Activated CD8-positive, alpha-beta T cell treated with anti-CD3 and anti-CD28 coated beads, Interleukin-2, amount 10 ng/mL, durations not matched to agents 7 days and 5 days (primary cell): ENCODE measurements at regions of chr19 and their contacts with region 1.

Region 1: GRCh38 chr19:14405758-14406644 is 13.1 kb downstream of the DDX39A start:
- DNase-seq: peak; percentile 91
- ATAC-seq: peak; percentile 54
- H3K4me3 Mint-ChIP-seq: no peak overlapping the region
- H3K27ac Mint-ChIP-seq: peak overlapping the region; percentile 77
- H3K4me1 Mint-ChIP-seq: peaks cover 30% of the 10 kb centered on the region
- H3K27me3 Mint-ChIP-seq: no peaks in the 10 kb centered on the region

Region 2: DNA sequence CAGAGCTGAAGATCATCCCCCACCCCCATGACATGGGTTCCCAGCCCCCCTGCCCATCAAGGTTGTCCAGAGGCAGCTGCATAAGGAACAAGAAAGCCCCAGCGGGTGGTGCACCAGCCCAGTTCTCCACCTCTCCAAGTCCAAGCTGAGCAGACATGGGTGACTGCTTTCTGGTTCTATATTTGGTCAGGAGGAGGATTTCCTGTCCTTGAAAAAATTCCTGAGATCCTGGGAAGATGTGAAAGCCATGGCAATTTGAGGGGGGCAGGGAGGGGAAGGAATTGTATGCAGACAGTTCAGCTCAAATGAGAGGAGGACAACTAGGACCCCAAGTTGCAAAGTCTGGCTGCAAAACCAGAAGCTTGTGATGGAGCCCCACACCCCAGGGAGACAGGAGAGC is 80.1 kb before region 1 on chr19:
- CTCF ChIA-PET with region 1: no interaction called
- POLR2A ChIA-PET with region 1: no interaction called
- DNase-seq: no peak
- ATAC-seq: no peak
- H3K4me3 Mint-ChIP-seq: no peak overlapping the region
- H3K27ac Mint-ChIP-seq: no peak overlapping the region
- H3K4me1 Mint-ChIP-seq: no peaks in the 10 kb centered on the region
- H3K27me3 Mint-ChIP-seq: no peaks in the 10 kb centered on the region

Region 3: DNA sequence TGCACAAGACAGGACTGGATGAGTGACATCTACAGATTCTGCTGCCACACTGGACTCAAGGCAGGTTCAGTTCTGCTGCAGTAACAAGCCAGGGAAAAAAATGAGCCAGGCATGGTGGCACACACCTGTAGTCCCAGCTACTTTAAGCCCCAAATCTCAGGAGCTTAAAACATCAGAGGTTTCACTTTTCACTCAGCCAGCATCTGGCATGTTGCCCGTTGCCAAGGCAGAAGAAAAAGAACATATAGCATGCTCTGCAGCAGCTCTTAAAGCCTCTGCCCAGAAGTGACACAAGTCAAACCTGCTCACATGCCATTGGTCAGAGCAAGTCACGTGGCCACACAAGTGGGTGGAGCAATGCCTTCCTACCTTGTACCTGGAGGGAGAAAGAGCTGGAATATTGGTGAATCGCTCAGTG is 39.5 kb before region 1 on chr19:
- CTCF ChIA-PET with region 1: interaction called, 123 read pairs
- POLR2A ChIA-PET with region 1: interaction called, 20 read pairs
- DNase-seq: peak; percentile 92
- ATAC-seq: peak; percentile 38
- H3K4me3 Mint-ChIP-seq: peak overlapping the region; percentile 45
- H3K27ac Mint-ChIP-seq: peak overlapping the region; percentile 86
- H3K4me1 Mint-ChIP-seq: peaks cover 76% of the 10 kb centered on the region
- H3K27me3 Mint-ChIP-seq: no peaks in the 10 kb centered on the region

Region 4: GRCh38 chr19:14383661-14384555 is 22.1 kb before region 1 on chr19:
- CTCF ChIA-PET with region 1: interaction called, 31 read pairs
- POLR2A ChIA-PET with region 1: interaction called, 49 read pairs
- DNase-seq: peak; percentile 70
- ATAC-seq: peak; percentile 10
- H3K4me3 Mint-ChIP-seq: peak overlapping the region; percentile 86
- H3K27ac Mint-ChIP-seq: peak overlapping the region; percentile 89
- H3K4me1 Mint-ChIP-seq: peaks cover 45% of the 10 kb centered on the region
- H3K27me3 Mint-ChIP-seq: no peaks in the 10 kb centered on the region

Region 5: DNA sequence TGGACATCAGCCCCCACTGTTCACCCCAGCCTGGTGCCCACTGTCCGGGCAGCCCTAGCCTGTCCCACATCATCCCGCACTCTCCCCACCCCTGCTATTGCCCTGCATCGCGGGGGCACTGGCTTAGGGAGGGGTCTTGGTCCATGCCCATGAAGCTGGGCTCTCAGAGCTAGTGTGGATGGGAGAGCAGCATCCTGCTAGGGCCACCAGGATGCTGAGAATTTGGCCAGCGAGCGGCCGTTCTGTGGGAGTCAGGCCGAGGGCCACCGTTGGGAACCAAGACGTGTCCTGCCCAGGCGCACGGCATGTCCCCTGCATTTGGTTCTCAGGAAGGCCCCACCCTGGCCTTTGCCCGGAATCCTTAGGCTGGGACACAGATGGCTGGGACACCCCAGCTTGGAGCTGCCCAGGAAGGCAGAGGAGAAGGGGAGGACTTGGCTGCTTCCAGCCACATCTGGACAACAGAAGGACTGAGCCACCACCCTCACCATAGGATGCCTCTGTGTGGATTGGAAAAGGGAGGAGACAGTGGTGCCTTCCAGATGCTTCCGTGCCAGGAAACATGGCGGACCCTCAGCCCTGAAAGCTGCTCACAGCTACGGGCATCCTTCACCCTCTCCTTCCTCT is 10.2 kb before region 1 on chr19:
- CTCF ChIA-PET with region 1: interaction called, 6 read pairs
- POLR2A ChIA-PET with region 1: interaction called, 11 read pairs
- DNase-seq: no peak
- ATAC-seq: peak; percentile 7
- H3K4me3 Mint-ChIP-seq: no peak overlapping the region
- H3K27ac Mint-ChIP-seq: no peak overlapping the region
- H3K4me1 Mint-ChIP-seq: peaks cover 6% of the 10 kb centered on the region
- H3K27me3 Mint-ChIP-seq: no peaks in the 10 kb centered on the region

Region 6: DNA sequence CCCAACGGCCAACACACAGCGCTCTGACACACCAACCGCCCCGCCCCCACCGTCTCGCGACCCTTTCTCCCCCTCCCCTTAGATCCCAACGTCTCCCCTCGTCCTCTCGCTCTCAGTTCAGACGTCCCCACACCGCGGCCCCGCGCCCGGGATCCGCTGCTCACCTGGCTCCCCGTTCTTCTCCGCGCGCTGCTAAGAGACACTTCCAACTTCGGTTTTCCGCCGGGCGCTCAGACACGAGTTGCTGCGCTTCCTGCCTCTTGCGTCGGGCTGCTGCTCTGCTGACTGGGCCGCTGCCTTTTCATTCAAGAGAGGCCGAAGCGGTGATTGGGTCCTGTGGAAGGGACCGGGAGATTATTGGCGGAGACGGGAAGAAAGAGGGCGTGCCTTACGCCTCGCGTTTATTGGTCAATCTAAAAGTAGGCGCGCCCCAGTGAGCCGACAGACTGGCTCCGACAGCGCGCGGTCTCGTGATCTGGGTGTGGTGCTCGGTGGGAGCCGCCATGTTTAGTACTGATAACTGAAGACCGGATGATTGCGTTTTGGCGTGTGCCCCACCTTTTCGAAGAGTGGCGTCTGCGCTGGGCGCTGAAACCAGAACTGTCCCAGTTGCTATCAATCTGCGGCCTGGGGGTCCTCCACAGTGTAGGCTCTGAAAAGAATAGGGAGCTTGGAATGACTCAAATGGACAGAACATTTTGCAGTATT is 13.3 kb after region 1 on chr19 and contains the start of gene DDX39A:
- CTCF ChIA-PET with region 1: interaction called, 6 read pairs
- POLR2A ChIA-PET with region 1: interaction called, 20 read pairs
- DNase-seq: peak; percentile 99
- ATAC-seq: peak; percentile 91
- H3K4me3 Mint-ChIP-seq: peak within 1 kb of the TSS; percentile 94
- H3K27ac Mint-ChIP-seq: peak within 1 kb of the TSS; percentile 99
- H3K4me1 Mint-ChIP-seq: peaks cover 41% of the 10 kb centered on the region
- H3K27me3 Mint-ChIP-seq: no peaks in the 10 kb centered on the region
- total RNA-seq, gene DDX39A: 309 to 313 TPM

Region 7: DNA sequence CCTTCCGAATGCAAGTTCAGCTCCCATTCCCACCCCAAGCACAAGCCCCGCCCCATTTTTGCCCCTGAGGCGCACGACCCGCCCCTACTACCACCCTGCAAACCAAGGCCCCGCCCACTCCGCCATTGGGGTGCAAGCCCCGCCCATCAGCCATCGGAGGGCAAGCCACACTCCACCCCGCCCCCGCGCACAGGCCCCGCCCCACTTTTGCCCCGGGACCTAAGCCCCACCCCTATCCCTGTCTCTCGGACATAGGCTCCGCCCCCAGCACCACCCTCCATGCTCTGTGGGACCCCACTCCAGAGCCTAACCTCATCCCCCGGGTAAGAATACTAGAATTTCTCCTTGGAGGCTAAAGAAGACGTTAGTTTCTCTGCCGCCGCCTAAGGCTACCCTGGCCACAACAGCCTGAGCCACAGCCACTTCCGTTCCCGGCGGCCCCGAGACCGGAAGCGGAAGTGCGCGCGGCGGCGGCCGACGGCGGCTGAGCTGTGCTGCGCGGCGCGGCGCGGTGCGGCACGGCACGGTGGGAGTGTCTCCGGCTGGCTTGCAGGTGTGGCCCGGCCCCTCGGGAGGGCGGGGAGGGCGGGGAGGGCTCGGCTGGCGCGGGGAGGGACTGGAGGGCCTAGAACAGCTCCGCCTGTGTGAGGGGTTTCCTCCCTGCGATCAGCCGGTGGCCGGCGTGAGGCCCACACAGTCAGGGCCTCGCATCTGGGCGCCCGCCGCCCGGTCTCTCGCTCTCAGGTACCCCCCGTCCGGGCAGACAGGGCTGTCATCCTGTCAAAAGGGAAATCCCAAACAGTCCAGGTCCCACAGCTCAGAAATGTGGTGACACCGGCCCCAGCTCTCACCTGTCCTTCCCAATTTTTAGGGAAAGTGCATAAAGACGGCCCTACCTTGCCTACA is 283.9 kb after region 1 on chr19 and contains the start of gene ZNF333:
- CTCF ChIA-PET with region 1: no interaction called
- POLR2A ChIA-PET with region 1: no interaction called
- DNase-seq: peak; percentile 100
- ATAC-seq: peak; percentile 96
- H3K4me3 Mint-ChIP-seq: peak within 1 kb of the TSS; percentile 89
- H3K27ac Mint-ChIP-seq: peak within 1 kb of the TSS; percentile 100
- H3K4me1 Mint-ChIP-seq: peaks cover 22% of the 10 kb centered on the region
- H3K27me3 Mint-ChIP-seq: no peaks in the 10 kb centered on the region
- total RNA-seq, gene ZNF333: 7.3 TPM